HEK293 (cell line): ENCODE measurements at regions of chr10 and their contacts with region 1.

Region 1: GRCh38 chr10:124418726-124419501 is at the start of gene OAT:
- H3K4me3 ChIP-seq: peak within 1 kb of the TSS; percentile 87
- H3K27ac ChIP-seq: peak within 1 kb of the TSS; percentile 77
- H3K4me1 ChIP-seq: peaks cover 22% of the 10 kb centered on the region
- CTCF ChIP-seq: peak; percentile 66; the same call in 1 of the 2 replicates

Region 2: GRCh38 chr10:124279882-124280281 is 139.0 kb before region 1 on chr10:
- CTCF ChIA-PET with region 1: no interaction called
- POLR2A ChIA-PET with region 1: no interaction called
- H3K4me3 ChIP-seq: no peak overlapping the region
- H3K27ac ChIP-seq: no peak overlapping the region
- H3K4me1 ChIP-seq: no peaks in the 10 kb centered on the region
- CTCF ChIP-seq: no peak

Region 3: GRCh38 chr10:124403548-124403947 is 15.4 kb before region 1 on chr10:
- CTCF ChIA-PET with region 1: interaction called, 22 read pairs
- POLR2A ChIA-PET with region 1: interaction called, 23 read pairs
- H3K4me3 ChIP-seq: no peak overlapping the region
- H3K27ac ChIP-seq: no peak overlapping the region
- H3K4me1 ChIP-seq: no peaks in the 10 kb centered on the region
- CTCF ChIP-seq: 0 out of 2 replicates have a peak, but pooled peaks have one; percentile 27

Region 4: DNA sequence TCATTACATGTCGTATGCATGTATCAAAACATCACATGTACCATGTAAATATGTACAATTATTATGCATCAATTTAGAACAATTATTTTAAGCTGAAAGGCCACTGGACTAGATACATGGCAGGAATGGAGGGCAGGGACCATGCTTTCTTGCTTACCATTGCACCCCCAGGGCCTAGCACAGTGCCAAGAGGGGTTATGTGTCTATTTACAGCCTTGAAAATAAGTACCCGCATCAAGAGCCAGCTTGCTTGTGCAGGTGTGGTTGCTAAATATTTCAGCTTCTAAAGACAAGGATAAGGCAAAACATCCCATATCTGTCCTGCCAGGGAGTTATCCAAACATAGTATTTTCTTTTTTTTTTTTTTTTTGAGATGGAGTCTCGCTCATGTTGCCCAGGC is 14.5 kb after region 1 on chr10:
- CTCF ChIA-PET with region 1: interaction called, 11 read pairs
- POLR2A ChIA-PET with region 1: interaction called, 16 read pairs
- H3K4me3 ChIP-seq: no peak overlapping the region
- H3K27ac ChIP-seq: no peak overlapping the region
- H3K4me1 ChIP-seq: no peaks in the 10 kb centered on the region
- CTCF ChIP-seq: no peak

Region 5: DNA sequence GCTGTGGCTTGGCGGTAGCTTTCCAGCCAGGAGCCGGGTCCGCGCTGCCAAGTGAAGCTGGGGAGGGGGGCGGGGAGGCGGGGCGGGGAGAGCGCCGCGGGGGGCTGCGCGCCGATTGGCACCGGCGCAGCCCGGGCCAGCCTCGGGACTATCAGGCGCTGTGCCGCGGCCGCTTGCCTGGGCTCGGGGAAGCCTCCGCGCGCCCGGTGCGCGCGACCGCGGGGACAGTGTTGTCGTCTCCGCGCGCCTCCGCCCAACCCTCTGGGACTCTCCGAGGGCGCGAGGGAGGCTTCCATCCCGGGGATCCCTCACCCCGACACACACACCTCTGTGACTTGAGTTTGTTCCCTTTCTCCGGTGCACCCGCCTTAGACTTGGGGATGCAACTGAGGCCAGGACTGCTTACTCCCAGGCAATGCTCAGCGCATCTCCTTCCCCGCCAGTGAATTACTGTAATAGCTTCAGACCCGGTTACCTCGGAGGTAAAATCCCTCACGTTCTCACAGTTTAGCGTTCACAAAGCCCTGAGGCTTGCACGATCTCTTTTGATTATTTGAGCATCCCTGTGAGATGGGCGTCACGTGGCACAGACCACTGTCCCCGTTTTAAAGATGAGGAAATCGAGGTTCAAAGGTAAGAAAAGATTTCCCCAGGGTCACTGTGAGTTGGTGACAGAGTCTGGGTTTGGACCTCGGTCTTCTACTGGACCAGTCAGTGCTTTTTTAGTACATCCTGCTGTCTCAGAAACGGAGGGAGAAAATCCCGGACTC is 31.3 kb after region 1 on chr10 and contains the start of gene NKX1-2:
- CTCF ChIA-PET with region 1: interaction called, 3 read pairs
- POLR2A ChIA-PET with region 1: interaction called, 17 read pairs
- H3K4me3 ChIP-seq: peak within 1 kb of the TSS; percentile 36
- H3K27ac ChIP-seq: peak within 1 kb of the TSS; percentile 9; the same call in 1 of the 2 replicates
- H3K4me1 ChIP-seq: peaks cover 5% of the 10 kb centered on the region; the same call in 1 of the 2 replicates
- CTCF ChIP-seq: no peak

Region 6: DNA sequence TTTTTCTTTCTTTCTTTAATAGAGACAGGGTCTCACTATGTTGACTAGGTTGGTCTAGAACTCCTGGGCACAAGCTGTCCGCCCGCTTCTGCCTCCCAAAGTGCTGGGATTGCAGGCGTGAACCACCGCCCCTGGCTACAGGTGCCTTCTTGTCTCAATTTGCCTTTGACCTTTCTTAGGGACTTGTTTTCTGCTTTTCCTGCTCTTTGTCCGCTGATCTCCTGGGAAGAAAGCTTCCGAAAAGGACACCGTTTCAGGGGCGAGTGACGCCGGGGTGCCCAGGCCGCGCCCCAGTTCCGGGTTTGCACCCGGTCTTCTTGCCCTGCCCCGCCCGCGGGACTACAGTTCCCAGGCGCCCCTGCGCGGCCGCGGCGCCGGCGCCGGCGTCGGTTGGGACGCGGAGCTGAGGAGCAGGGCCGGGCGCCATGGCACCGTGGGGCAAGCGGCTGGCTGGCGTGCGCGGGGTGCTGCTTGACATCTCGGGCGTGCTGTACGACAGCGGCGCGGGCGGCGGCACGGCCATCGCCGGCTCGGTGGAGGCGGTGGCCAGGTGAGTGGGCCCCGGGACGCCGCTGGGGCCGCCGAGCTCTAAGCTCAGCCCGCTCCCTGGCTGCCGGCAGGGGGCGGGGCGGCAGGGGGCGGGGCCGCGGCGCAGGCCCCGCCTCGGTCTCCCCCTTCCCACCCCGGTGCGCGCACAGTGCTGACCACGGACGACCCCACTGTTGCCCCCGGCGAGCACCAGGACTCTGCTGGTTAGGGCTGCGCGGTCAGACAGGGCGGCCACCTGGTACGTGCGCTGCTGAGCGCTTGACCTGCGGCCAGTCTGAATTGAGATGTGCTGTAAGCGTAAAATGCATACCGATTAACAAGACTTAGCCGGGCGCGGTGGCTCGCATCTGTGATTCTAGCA is 42.8 kb after region 1 on chr10 and contains the start of gene LHPP:
- CTCF ChIA-PET with region 1: interaction called, 3 read pairs
- POLR2A ChIA-PET with region 1: interaction called, 17 read pairs
- H3K4me3 ChIP-seq: peak within 1 kb of the TSS; percentile 78
- H3K27ac ChIP-seq: peak within 1 kb of the TSS; percentile 44; the same call in 1 of the 2 replicates
- H3K4me1 ChIP-seq: no peaks in the 10 kb centered on the region
- CTCF ChIP-seq: no peak

Region 7: GRCh38 chr10:124588736-124589490 is 170.0 kb after region 1 on chr10:
- CTCF ChIA-PET with region 1: no interaction called
- POLR2A ChIA-PET with region 1: no interaction called
- H3K4me3 ChIP-seq: no peak overlapping the region
- H3K27ac ChIP-seq: no peak overlapping the region
- H3K4me1 ChIP-seq: no peaks in the 10 kb centered on the region
- CTCF ChIP-seq: no peak